H1 (cell line): ENCODE measurements at regions of chr12 and their contacts with region 1.

Region 1: DNA sequence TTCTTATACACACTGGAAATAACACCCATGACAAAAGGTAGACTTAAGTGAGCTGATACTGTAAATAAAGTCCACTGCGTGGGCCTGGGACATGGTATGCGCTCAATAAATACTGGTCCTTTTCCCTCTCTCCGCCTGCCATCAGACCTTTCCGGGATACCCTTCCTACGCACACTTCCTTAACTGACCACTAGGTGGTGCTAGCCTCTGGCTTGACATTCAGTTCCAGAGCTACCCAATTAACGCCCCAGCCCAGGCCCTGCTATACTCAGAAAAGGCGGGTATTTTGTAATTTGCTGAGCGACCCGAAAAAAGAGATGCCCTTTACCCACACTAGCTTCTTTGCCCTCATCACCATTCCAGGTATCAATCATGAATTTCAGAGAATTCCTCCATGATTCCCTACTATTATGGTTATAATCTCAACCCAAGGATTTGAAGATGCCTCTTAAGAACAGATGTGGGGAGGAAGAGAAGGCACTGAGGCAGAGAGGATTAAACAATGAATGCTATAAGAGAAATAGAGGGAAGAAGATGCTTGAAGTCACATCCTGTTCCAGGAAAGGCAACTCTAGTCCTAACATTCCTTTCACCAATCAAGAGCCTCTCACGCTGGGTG is 3.9 kb upstream of the LRP1 start:
- DNase-seq: peak in 1 of 2 experiments; percentile 89
- H3K4me3 ChIP-seq: no peak overlapping the region
- H3K27ac ChIP-seq: no peak overlapping the region
- H3K4me1 ChIP-seq: peaks cover 0 to 5% (median 4%) of the 10 kb centered on the region in 4 experiments; a peak in 4 of 7 replicates
- H3K27me3 ChIP-seq: no peaks in the 10 kb centered on the region
- CTCF ChIP-seq: peak; percentile 83 to 99 (median 92)
- EP300 ChIP-seq: no peak
- POLR2A ChIP-seq: no peak
- RAD21 ChIP-seq: peak; percentile 83 to 85

Region 2: DNA sequence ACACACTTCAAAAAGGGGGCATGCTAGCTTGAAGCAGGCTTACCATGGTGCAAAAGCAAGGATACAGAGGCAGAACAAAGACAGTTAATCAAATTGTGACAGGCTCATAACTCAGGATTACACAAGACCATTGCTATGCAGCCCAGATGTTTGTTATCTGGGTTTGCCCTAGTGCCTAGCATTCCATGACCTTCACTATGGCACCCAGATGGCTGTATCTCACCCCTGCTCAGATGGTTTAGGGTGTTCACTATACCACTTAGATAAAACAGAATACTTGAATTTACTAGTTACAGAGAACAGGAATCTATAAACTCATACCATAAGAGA is 246.4 kb before region 1 on chr12:
- CTCF ChIA-PET with region 1: no interaction called
- POLR2A ChIA-PET with region 1: no interaction called
- DNase-seq: no peak
- H3K4me3 ChIP-seq: no peak overlapping the region
- H3K27ac ChIP-seq: no peak overlapping the region
- H3K4me1 ChIP-seq: peaks cover 0 to 4% (median 0%) of the 10 kb centered on the region in 4 experiments; a peak in 2 of 7 replicates
- H3K27me3 ChIP-seq: no peaks in the 10 kb centered on the region
- CTCF ChIP-seq: no peak
- EP300 ChIP-seq: no peak
- POLR2A ChIP-seq: no peak
- RAD21 ChIP-seq: no peak

Region 3: DNA sequence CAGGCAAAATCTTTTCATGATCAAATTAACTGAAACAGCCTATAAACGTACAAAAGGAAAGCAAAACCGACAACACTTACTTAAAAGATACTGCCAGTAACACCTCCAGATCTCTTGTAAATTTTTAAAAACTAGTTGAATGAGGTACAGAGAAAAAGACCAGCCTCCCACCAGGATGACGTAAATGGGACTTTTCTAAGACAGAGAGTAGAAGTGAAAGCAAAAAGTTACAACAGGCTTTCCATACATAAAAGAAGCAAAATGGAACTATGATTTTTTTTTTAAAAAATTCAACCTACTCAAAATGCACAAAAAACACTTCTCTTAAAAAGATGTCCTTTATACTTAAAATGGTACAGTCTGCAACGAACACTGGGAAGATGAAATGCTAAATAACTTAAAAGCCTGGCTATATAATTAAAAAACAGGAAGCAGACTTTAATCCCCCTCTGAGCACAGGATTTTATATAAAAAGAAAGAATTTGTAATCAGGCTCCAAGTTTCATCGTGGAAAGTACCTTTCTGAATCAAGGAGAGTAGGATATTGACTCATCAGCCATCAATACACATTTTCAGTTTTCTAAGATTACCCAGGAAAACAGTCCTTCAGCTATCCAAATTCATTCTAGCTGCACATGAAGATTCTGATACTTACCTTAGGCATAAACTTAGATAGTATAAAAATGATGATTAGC is 60.2 kb before region 1 on chr12:
- CTCF ChIA-PET with region 1: interaction called, 20 read pairs
- POLR2A ChIA-PET with region 1: no interaction called
- DNase-seq: no peak
- H3K4me3 ChIP-seq: no peak overlapping the region
- H3K27ac ChIP-seq: no peak overlapping the region
- H3K4me1 ChIP-seq: no peaks in the 10 kb centered on the region
- H3K27me3 ChIP-seq: no peaks in the 10 kb centered on the region
- CTCF ChIP-seq: no peak
- EP300 ChIP-seq: no peak
- POLR2A ChIP-seq: no peak
- RAD21 ChIP-seq: no peak

Region 4: DNA sequence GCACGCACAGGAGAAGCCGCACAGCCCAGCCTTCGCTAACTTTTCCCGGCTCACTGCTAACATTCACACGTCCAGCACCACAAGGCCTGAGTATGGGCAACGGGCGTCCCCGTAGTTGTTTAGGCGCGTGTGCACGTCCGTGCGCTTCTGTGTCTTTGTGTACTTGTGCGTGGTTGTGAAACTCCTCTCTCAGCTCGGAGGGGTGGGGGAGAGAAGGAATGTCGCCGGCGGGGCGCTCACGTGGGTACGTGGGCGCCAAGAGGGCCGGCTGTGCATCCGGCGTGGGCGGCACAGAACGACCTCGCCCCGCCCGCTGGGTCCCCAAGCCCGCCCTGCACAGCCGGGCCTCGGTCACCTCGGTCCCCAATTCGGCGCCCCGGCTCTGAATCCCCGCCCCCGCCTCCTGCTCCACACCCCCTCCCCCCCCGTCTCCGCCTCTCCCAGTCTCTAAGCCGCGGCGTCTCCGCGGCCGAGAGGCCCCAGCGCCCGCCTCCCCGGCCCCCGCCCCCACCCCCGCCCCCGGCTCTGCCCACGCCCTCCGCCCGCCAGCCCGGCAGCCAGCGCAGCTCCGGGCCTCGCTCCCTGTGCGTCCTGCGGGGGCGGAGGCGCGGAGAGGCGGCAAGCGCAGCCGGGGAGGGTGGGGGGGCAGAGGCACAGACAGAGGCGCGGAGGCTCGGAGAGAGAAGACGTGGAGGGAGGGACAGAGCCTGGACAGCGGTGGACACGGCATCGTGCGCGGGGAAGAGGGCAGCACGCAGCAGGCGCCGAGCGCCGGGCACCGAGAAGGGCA is 35.7 kb before region 1 on chr12 and contains the start of gene NAB2:
- CTCF ChIA-PET with region 1: interaction called, 22 read pairs
- POLR2A ChIA-PET with region 1: interaction called, 9 read pairs
- DNase-seq: peak in 1 of 2 experiments; percentile 87
- H3K4me3 ChIP-seq: peak within 1 kb of the TSS; percentile 92 to 96 (median 93)
- H3K27ac ChIP-seq: peak within 1 kb of the TSS; percentile 84
- H3K4me1 ChIP-seq: peaks cover 0 to 25% (median 15%) of the 10 kb centered on the region in 4 experiments; a peak in 6 of 7 replicates
- H3K27me3 ChIP-seq: no peaks in the 10 kb centered on the region
- CTCF ChIP-seq: no peak
- EP300 ChIP-seq: no peak
- POLR2A ChIP-seq: 0 out of 3 replicates have a peak, but pooled peaks of 1 of the 2 experiments have one; percentile 3
- RAD21 ChIP-seq: no peak
- total RNA-seq, gene NAB2: 20.6 and 20.9 TPM in 2 replicates

Region 5: DNA sequence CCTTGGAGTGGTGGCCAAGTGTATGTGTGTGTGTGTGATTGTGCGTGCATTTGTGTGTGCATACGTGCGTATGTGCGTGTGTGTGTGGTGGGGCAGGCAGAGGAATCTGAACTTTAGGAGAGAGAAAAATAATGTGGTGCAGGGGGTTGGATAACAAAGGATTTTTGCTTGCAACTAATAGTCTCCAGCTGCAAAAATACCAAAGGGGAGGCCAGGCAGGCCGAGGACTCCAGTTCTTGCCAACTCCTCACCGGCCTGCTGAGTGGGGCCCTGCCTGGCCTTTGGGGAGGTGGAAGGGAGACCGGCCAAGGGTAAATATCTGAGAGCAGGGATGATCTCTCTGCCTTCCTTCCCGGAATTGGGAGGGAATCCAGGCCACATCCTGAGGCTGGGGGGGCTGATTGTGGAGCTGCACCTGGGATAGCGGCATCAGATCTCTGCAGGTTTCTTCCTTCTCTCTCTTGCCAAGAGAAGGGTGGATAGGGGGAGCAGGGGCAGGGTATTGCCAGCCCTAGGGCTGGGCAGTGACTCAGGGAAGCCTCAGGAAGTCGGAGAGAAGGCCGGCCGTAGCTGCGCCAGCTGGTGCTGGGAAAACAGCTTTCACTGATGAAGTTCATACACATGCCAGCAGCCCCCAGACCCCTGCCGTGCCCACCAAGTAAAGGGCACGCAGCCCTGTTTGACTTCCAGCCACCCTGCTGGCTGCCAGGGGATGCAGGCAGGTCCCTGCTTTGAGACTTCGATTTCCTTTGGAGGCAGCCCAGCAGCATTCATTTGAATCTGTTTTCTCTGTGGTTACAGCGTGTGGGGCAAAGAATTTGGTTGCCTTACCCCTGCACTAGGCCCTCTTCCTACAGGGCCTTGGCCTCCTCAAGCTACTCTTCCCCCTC is 27.6 kb after region 1 on chr12:
- CTCF ChIA-PET with region 1: interaction called, 70 read pairs
- POLR2A ChIA-PET with region 1: interaction called, 62 read pairs
- DNase-seq: no peak
- H3K4me3 ChIP-seq: no peak overlapping the region
- H3K27ac ChIP-seq: no peak overlapping the region
- H3K4me1 ChIP-seq: peaks cover 0 to 4% (median 1%) of the 10 kb centered on the region in 4 experiments; a peak in 4 of 7 replicates
- H3K27me3 ChIP-seq: no peaks in the 10 kb centered on the region
- CTCF ChIP-seq: no peak
- EP300 ChIP-seq: no peak
- POLR2A ChIP-seq: no peak
- RAD21 ChIP-seq: no peak

Region 6: GRCh38 chr12:57182921-57183790 is 58.8 kb after region 1 on chr12:
- CTCF ChIA-PET with region 1: interaction called, 77 read pairs
- POLR2A ChIA-PET with region 1: interaction called, 7 read pairs
- DNase-seq: peak; percentile 54 to 97
- H3K4me3 ChIP-seq: no peak overlapping the region
- H3K27ac ChIP-seq: no peak overlapping the region
- H3K4me1 ChIP-seq: no peaks in the 10 kb centered on the region; a peak in 1 of 7 replicates
- H3K27me3 ChIP-seq: no peaks in the 10 kb centered on the region
- CTCF ChIP-seq: peak in 2 of 3 experiments; percentile 82 to 96; a peak in 3 of 4 replicates
- EP300 ChIP-seq: no peak
- POLR2A ChIP-seq: no peak
- RAD21 ChIP-seq: peak; percentile 71 to 76

Region 7: DNA sequence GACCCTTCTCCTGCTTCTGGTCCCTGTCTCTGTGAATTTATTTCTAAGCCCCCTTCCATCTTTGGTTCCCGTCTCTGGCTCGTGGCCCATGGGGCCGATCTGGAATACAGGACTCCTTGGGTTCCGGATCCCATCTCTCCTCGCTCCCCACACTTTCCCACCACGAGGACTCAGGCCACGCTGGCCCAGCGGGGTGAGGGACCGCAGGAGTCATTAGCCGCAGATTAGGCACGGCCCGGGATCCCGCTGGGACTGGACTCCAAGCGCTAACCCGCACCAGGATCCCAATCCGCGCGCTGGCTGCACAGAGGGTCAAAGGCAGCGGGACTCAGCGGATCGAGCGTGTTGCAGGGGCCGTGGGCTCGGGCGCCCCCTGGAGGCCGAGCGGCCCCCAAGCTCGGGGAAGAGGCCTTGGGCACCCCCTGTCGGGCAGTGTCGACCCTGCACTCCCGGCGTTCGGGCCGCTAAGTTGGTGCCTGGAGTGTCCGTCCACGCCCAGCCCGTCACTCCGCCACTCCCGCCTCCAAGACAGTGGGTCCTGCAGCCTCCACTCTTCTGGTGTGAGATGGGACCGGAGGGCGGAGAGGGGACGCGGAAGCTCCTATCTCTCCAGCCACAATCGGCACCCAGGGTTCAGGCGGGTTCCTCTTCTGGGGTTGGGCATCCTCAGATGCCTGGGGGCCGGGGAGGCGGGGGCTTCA is 114.6 kb after region 1 on chr12:
- CTCF ChIA-PET with region 1: interaction called, 3 read pairs
- POLR2A ChIA-PET with region 1: interaction called, 21 read pairs
- DNase-seq: peak in 1 of 2 experiments; percentile 98
- H3K4me3 ChIP-seq: peak overlapping the region; percentile 42 to 67 (median 54)
- H3K27ac ChIP-seq: no peak overlapping the region
- H3K4me1 ChIP-seq: peaks cover 6 to 68% (median 45%) of the 10 kb centered on the region in 4 experiments
- H3K27me3 ChIP-seq: peaks cover 59 to 80% (median 74%) of the 10 kb centered on the region in 4 experiments
- CTCF ChIP-seq: peak in 2 of 3 experiments; percentile 100; a peak in 3 of 4 replicates
- EP300 ChIP-seq: peak in 1 of 2 experiments; percentile 59; a peak in 1 of 3 replicates
- POLR2A ChIP-seq: peak in 1 of 2 experiments; percentile 24; a peak in 1 of 3 replicates
- RAD21 ChIP-seq: peak; percentile 85 to 91